Spleen (tissue), 13 donors: ENCODE measurements at regions of chr16 and their contacts with region 1.

Region 1: GRCh38 chr16:6317934-6318333 is 1014.7 kb upstream of the RBFOX1 start:
- DNase-seq: no peak
- H3K4me3 ChIP-seq: no peak overlapping the region
- H3K27ac ChIP-seq: no peak overlapping the region
- H3K4me1 ChIP-seq: no peaks in the 10 kb centered on the region
- H3K27me3 ChIP-seq: no peaks in the 10 kb centered on the region
- CTCF ChIP-seq: no peak
- POLR2A ChIP-seq: no peak

Region 2: DNA sequence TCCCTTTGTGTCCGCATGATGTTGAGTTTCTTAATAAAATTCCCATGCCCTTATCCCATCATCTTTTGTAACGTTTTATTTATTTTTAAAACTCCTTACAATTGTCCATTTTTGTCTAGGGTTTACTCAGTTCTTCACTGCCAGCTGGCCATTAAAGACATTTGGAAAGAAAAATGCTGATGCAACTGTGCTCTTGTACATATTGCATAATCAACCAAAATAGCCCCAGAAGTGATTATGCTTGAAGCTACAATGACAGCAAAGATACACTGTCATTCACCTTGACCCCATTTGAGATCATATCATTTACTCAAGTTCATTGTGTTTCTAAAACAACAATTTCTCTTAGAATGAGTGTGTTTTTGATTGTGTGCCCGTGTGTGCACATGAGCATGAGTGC is 59.9 kb before region 1 on chr16:
- intact Hi-C with region 1: no loop called
- DNase-seq: no peak
- H3K4me3 ChIP-seq: no peak overlapping the region
- H3K27ac ChIP-seq: no peak overlapping the region
- H3K4me1 ChIP-seq: no peaks in the 10 kb centered on the region
- H3K27me3 ChIP-seq: no peaks in the 10 kb centered on the region
- CTCF ChIP-seq: no peak
- POLR2A ChIP-seq: no peak

Region 3: GRCh38 chr16:6382924-6383459 is 65.1 kb after region 1 on chr16:
- intact Hi-C with region 1: loop called (anchors 10 kb)
- DNase-seq: no peak
- H3K4me3 ChIP-seq: no peak overlapping the region
- H3K27ac ChIP-seq: no peak overlapping the region
- H3K4me1 ChIP-seq: no peaks in the 10 kb centered on the region
- H3K27me3 ChIP-seq: no peaks in the 10 kb centered on the region
- CTCF ChIP-seq: no peak
- POLR2A ChIP-seq: no peak

Region 4: DNA sequence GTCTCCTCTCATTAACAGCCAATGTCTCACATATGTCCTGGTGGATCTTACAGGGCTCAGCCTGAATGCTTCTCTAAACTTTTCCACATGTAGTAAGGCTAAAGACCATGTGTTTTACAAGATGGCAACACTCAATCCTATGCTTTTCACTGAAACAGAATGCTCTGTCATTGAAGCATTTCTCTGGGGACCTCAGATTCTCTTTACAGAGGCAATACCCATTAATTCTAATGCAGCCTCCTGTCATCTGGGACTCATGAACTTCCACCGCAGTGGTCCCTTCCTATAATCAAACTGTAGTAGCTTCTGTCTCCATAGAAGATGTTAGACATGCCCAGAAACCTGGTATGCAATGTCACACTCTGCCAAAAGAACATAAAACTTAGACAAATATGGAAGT is 88.1 kb after region 1 on chr16:
- intact Hi-C with region 1: no loop called
- DNase-seq: no peak
- H3K4me3 ChIP-seq: no peak overlapping the region
- H3K27ac ChIP-seq: no peak overlapping the region
- H3K4me1 ChIP-seq: no peaks in the 10 kb centered on the region
- H3K27me3 ChIP-seq: no peaks in the 10 kb centered on the region
- CTCF ChIP-seq: no peak
- POLR2A ChIP-seq: no peak